Posterior cingulate gyrus (tissue), 11 donors: ENCODE measurements at regions of chr4 and their contacts with region 1.

Region 1: DNA sequence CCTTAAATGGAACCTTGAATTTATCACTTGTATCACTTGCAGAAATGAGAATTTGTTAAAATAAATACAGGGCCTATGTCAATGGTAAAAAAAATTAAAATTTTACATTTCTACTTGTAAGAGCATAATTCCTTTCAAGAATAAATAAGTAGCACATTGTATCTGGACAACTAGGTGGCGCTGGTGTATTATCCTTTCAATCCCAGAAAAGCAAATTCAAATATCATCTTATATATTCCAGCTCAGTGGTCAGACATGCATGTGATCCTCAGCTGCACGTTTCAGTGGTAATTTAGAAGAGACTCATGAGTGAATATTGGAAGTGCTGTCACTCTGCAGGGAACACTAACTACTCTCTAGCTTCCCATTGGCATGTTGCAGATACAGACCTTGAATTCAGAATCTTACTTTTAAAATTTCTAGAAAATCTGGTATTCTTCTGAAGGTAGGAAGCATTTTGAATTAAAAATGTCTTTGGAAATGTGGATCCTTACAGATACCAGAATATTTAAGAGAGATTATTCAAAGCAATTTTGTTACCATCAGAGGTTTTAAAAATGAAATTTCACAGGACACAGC is 1414.7 kb upstream of the TENM3 start:
- DNase-seq: peak in 2 of 10 donors; percentile 22 to 31

Region 2: DNA sequence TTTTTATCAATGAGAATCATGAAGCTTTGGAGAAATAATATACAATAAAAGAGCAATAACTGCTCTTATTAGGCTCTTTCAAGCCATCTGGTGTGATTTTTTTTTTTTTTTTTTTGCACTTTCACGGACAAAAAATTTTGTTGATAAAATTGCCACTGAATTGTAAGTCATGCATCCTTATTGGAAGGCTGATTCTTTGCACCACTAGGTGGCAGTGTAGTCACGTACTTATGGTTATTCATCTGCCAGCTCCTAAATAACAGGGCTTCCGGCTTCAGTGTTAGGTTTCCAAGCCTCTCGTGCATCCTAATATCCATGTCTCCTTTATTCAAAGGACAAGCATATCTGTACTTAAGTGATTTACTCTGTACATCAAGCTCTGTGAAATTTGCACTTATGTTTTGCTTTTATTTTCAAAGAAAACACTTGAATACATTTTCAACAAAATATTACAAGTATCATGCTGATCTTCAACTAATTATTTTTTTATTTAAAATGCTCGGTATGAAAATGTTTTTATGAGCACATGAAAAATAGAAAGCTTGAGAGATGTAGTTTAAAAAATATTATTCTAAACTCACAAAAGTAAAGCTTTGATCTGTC is 163.7 kb before region 1 on chr4:
- intact Hi-C with region 1: loop called (anchors 5 kb)
- DNase-seq: peak in 5 of 10 donors; percentile 48 to 80 (median 69)

Region 3: GRCh38 chr4:180947425-180947824 is 118.9 kb after region 1 on chr4:
- intact Hi-C with region 1: loop called (anchors 5 kb)
- DNase-seq: no peak

Region 4: DNA sequence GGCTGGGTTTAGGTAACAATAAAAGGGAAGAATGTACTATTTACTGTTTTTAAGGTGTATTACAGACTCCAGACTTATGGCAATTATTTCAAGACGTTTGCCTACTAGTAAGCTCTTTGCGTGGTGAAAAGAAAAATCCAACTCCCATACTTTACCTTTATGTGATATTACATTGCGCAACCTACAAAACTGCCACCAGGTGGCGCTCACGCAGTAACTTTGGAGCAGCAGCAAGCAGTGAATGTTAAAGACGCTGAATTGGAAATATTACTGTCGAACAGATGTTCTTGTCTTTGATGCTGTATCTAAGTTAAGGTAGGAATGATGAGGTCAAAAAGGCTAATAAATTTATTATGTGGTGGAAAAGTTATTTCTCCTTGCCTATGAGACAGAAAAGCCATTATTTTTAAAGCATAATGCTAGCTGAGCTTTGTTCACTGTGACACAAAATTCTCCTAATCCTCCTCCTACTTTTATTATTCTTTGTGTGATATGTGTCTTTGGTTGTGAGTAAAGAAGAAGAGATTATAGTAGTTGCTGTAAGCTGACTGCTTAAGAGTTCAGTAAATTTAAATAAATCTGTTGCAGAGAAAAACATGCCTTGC is 314.8 kb after region 1 on chr4:
- intact Hi-C with region 1: loop called (anchors 2 kb)
- DNase-seq: peak; percentile 77 to 97 (median 86)

Region 5: GRCh38 chr4:181528570-181529184 is 700.1 kb after region 1 on chr4:
- intact Hi-C with region 1: loop called (anchors 5 kb)
- DNase-seq: peak; percentile 46 to 95 (median 78)